Activated naive CD4-positive, alpha-beta T cell treated with anti-CD3 and anti-CD28 coated beads for 36 hours (primary cell): ENCODE measurements at regions of chr7 and their contacts with region 1.

Region 1: GRCh38 chr7:30564243-30564892 is 30.3 kb upstream of the GARS1 start:
- DNase-seq: peak; percentile 85
- H3K4me3 Mint-ChIP-seq: no peak overlapping the region
- H3K27ac Mint-ChIP-seq: no peak overlapping the region
- H3K4me1 Mint-ChIP-seq: no peaks in the 10 kb centered on the region
- H3K27me3 Mint-ChIP-seq: no peaks in the 10 kb centered on the region

Region 2: DNA sequence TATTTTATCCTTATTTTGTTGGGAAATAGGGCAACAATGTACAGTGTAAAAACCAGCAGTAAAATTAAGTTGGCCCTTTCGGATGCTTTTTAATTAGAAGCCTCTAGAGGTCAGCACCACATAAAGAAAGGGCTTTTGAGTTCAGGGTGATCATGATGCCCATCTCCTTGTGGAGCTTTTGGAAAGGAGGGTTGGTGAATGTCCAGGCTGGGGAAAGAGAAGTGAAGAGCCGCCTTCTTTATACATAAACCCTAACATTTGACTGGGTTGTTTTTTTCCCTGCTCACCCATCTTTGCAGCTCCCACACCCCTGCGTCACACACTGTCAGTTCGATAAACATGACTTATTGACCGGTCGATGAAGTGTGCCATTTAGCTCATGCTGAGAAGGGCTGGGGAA is 399.8 kb before region 1 on chr7:
- CTCF ChIA-PET with region 1: interaction called, 3 read pairs
- intact Hi-C with region 1: loop called (anchors 1 kb)
- DNase-seq: no peak
- H3K4me3 Mint-ChIP-seq: no peak overlapping the region
- H3K27ac Mint-ChIP-seq: peak overlapping the region; percentile 14
- H3K4me1 Mint-ChIP-seq: peaks cover 32% of the 10 kb centered on the region
- H3K27me3 Mint-ChIP-seq: no peaks in the 10 kb centered on the region

Region 3: DNA sequence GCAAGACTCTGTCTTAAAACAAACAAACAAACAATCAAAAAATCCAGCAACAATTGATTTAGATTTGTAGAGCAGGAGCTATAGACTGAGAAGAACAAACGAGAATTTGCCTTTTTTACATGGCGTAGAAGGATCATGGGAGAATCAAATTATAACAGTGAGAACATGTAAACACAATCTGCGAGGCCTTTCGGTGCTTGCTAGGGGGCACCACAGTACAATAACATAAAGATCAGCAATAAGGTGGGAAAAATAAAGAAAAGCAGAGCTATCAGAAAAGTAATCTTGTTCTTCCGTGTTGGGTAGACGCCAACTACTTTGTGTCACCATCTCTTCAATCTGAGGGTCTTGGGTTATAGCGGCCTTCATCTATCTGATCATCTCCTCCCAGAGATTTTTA is 168.0 kb before region 1 on chr7:
- CTCF ChIA-PET with region 1: no interaction called
- intact Hi-C with region 1: loop called (anchors 1 kb)
- DNase-seq: peak; percentile 9
- H3K4me3 Mint-ChIP-seq: no peak overlapping the region
- H3K27ac Mint-ChIP-seq: no peak overlapping the region
- H3K4me1 Mint-ChIP-seq: no peaks in the 10 kb centered on the region
- H3K27me3 Mint-ChIP-seq: no peaks in the 10 kb centered on the region

Region 4: DNA sequence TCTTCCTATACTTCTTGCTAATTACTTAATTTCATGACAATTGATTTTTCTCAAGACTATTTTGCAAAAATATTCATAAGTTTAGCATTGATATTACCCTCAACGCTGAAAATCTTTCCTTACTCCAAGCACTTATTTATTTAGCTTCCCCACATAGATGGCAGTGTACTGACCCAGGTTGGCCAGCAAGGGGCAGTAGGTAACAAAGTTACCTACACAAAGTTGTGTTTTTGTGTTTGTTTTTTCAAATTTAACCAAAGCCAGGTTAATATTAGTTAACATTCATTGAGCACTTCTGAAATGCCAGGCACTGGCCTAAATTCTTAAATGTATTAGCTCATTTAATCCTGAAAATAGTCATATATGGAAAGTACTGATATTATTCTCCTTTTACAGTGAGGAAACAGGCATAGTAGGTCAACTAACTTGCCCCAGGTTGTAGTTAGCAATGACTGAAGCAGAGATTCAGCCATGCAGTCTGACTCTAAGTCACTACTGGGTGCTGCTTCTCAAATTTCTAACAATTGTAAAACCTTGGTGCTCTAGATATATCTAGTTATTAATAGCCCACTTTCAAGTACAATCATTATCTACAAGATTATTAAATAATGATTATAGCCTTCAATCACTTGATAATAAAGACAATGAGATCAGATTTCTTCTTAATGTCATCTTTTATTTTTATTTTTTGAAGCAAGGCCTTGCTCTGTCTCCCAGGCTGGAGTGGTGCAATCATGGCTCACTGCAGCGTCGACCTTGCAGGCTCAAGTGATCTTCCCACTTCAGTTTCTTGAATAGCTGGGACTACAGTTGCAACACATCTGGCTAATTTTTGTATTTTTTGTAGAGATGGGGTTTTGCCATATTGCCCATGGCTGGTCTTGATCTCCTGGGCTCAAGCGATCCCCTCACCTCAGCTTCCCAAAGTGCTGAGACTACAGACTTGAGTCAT is 54.0 kb before region 1 on chr7:
- CTCF ChIA-PET with region 1: interaction called, 15 read pairs
- intact Hi-C with region 1: loop called (anchors 1 kb)
- DNase-seq: peak; percentile 57
- H3K4me3 Mint-ChIP-seq: no peak overlapping the region
- H3K27ac Mint-ChIP-seq: no peak overlapping the region
- H3K4me1 Mint-ChIP-seq: peaks cover 5% of the 10 kb centered on the region
- H3K27me3 Mint-ChIP-seq: no peaks in the 10 kb centered on the region

Region 5: DNA sequence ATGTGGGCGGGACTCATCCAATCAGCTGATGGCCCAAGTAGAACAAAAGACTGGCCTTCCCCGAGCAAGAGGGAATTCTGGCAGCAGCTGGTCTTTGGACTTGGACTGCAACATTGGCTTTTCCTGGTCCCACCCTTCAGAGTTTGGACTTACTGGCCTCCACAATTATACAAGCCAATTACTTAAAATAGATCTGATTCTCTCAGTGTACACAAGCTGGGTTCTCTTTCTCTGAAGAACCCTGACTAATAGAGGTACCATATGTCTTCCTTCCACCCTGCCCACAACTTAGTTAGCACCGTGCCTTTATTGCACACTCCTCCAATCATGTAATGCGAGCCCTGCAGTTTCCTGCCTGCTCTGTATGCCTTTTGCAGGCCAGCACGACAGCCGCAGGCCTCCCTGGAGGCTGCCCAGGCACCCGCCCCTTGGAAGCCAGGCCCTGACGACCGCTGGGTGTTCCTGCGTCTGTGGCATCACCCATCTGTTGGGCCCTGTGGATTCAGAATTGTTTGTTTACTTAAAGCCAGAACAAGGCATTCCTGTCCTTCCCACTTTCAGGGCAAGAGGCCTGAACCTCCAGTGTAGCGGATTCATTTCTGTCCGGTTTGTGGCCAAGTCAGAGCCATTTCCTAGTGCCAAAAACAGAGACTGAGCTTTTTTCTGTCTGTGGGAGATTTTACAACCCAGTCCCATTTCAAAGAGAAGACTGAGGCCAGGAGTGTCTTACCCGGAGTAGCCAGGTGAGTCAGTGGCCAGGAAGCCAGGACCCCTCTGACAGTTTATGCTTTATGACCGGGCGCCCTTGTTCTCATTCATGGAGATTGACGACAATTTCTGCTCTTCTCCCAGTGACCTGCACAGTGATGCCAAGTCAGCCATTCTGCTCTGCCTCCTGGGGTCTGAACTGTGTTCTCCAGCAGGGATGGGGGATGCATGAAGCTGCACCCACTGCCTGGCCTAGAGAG is 186.6 kb after region 1 on chr7:
- CTCF ChIA-PET with region 1: no interaction called
- intact Hi-C with region 1: no loop called
- DNase-seq: no peak
- H3K4me3 Mint-ChIP-seq: no peak overlapping the region
- H3K27ac Mint-ChIP-seq: no peak overlapping the region
- H3K4me1 Mint-ChIP-seq: no peaks in the 10 kb centered on the region
- H3K27me3 Mint-ChIP-seq: no peaks in the 10 kb centered on the region